Activated CD8-positive, alpha-beta memory T cell treated with anti-CD3 and anti-CD28 coated beads, Interleukin-2, amount 10 ng/mL, durations not matched to agents 7 days and 5 days (primary cell): ENCODE measurements at regions of chr6 and their contacts with region 1.

Region 1: GRCh38 chr6:150016324-150017185 is 8.8 kb downstream of the RAET1L start:
- DNase-seq: peak; percentile 67
- ATAC-seq: peak; percentile 61
- H3K4me3 Mint-ChIP-seq: no peak overlapping the region
- H3K27ac Mint-ChIP-seq: no peak overlapping the region
- H3K4me1 Mint-ChIP-seq: peaks cover 29% of the 10 kb centered on the region
- H3K27me3 Mint-ChIP-seq: peaks cover 78% of the 10 kb centered on the region

Region 2: GRCh38 chr6:149925974-149926777 is 90.4 kb before region 1 on chr6:
- CTCF ChIA-PET with region 1: interaction called, 10 read pairs
- DNase-seq: peak; percentile 90
- ATAC-seq: peak; percentile 76
- H3K4me3 Mint-ChIP-seq: peak overlapping the region; percentile 57
- H3K27ac Mint-ChIP-seq: no peak overlapping the region
- H3K4me1 Mint-ChIP-seq: peaks cover 26% of the 10 kb centered on the region
- H3K27me3 Mint-ChIP-seq: peaks cover 92% of the 10 kb centered on the region

Region 3: DNA sequence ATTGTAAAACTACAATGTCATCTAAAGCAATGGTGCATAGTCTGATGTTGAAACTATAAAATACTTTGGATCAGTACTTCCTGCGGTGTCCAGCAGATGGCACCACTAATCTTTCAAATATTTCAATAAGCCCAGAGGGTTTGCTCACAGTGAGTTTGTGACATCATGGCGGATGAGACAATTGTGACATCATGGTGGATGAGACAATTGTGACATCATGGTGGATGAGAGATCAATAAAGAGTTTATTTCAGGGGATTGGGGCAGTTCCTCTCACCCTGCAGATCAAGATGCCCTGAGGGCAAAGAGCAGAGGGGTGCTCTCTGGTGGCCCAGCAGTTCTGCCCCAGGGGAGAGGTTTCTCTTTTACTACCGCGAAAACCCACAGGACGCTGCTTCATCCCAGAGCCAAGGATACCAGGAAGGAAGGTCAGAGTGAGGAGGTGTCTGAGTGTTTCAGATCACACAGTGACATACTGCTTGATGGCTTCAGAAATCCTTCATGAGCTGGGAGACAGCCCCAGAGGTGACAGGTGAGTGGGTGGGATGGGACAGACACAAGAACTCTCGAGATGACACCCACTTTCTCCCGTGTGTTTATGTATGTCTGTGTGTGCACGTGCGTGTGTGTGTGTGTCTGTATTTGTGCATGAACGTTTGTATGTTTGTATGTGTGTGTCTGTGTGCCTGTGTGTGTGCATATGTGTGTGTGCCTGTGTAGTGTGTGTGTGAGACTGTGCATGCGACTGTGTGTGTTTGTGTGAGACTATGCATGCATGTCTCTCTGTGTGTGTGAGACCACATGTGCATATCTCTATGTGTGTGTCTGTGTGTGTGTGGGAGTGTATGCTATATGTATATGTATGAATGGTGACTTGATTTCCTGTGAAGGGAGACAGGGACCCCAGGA is 82.1 kb before region 1 on chr6:
- CTCF ChIA-PET with region 1: interaction called, 10 read pairs
- DNase-seq: peak; percentile 84
- ATAC-seq: peak; percentile 40
- H3K4me3 Mint-ChIP-seq: peak overlapping the region; percentile 8
- H3K27ac Mint-ChIP-seq: peak overlapping the region; percentile 2
- H3K4me1 Mint-ChIP-seq: peaks cover 31% of the 10 kb centered on the region
- H3K27me3 Mint-ChIP-seq: peaks cover 88% of the 10 kb centered on the region

Region 4: GRCh38 chr6:149951626-149952025 is 64.9 kb before region 1 on chr6:
- CTCF ChIA-PET with region 1: interaction called, 10 read pairs
- DNase-seq: no peak
- ATAC-seq: no peak
- H3K4me3 Mint-ChIP-seq: no peak overlapping the region
- H3K27ac Mint-ChIP-seq: no peak overlapping the region
- H3K4me1 Mint-ChIP-seq: peaks cover 15% of the 10 kb centered on the region
- H3K27me3 Mint-ChIP-seq: peaks cover 77% of the 10 kb centered on the region

Region 5: GRCh38 chr6:149990618-149991471 is 25.7 kb before region 1 on chr6:
- CTCF ChIA-PET with region 1: interaction called, 23 read pairs
- DNase-seq: peak; percentile 54
- ATAC-seq: peak; percentile 62
- H3K4me3 Mint-ChIP-seq: peak overlapping the region; percentile 68
- H3K27ac Mint-ChIP-seq: peak overlapping the region; percentile 4
- H3K4me1 Mint-ChIP-seq: peaks cover 32% of the 10 kb centered on the region
- H3K27me3 Mint-ChIP-seq: peaks cover 92% of the 10 kb centered on the region